ENCODE measurements at regions of chr9 and their contacts with region 1.

Region 1: GRCh38 chr9:124764774-124765438 is 6.2 kb downstream of the NR6A1 start:
- ATAC-seq: peak in 7 of 8 experiments; percentile 44 to 72 (median 57)
- H3K4me3 ChIP-seq: no peak overlapping the region
- H3K27ac ChIP-seq: no peak overlapping the region
- H3K4me1 ChIP-seq: peaks cover 20 to 44% of the 10 kb centered on the region in 2 donors

Region 2: DNA sequence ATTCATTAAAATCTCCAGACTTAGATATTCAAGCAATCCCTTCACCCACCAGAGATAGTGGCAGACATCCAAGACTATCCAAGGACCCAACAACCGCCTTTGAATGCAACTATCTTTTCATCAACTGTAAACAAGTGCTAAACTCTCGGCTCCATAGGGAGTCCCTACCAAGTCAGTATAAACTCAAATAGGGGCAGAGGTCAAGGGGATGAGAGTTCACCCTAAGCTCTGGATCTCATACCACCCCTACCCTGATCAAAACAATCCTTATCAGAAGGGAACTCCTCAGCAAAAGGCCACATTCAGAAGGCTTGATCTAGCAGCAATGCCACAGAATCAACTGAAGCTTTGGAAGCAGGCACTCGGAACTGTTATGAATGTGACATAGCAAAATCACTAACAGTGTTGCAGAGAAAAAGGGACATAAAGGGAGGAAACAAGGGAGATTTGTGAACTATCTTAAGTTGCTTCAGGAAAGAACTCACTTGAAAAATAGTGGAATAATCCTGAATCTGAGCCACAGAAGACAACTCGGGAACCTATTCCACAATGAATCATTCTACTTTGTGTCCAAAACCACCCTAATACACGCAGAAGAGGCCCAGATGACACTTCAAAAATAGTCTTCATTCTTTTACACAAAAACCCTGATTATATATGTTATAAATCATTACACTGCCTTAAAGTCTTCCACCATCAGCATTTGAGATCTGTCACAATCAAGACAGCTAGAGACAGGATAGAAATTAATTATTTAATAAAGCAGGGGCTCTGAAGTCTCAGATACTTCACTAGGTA is 43.6 kb before region 1 on chr9:
- in situ Hi-C with region 1: loop called in 1 of 9 experiments (anchors 10 kb)
- ATAC-seq: peak in 4 of 8 experiments; percentile 23 to 63 (median 42)
- H3K4me3 ChIP-seq: no peak overlapping the region
- H3K27ac ChIP-seq: no peak overlapping the region
- H3K4me1 ChIP-seq: peaks cover 7 to 8% of the 10 kb centered on the region in 2 donors

Measured in motor neuron (in vitro differentiated cells).